ENCODE measurements at regions of chr2 and their contacts with region 1.

Region 1: DNA sequence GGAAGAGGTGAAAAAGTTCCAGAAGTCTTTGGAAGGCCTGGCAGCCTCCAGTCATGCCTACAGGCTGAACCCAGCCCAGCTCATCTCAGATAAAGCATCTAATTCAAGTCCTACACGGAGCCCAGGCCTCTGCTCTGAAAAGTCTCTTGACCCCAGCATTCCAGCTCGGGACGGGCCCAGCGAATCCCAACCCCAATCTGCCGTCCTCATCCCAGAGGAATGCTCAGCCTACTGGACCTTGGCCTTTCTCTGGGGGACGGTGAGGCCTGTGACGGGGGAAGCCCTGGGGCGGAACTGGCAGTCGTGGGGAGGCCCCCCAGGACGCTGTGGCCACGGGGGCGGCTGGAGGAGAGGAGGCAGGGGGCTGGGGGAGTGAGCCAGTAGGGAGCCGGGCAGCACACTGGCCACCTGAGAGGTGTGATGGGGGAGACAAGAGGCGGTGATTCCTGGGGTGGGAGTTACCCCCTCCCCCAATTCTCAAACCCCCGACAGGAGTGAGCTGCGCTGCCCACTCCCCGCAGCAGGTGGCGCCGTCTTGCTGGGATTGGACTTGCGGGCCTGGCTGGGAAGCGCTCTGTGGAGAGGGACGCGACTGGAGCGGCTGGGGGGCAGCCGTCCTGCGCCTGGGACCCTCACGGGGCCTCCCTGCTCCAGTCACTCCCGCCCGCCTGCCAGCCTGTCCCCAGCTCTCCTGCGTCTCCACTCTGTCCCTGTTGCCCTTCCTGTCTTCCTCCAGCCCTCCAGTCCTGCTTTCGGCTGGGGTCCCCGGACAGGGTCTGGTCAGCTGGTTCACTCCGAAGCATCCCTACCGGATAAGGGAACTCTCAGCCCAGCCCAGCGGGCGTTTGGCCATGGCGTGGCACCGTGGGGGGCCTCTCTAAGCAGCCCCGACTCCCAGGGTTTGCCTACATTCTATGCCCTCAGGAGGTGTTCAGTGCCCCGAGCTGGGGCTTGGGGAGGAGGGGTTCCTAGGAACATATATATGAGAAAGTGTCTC is 182.6 kb upstream of the HAAO start:
- DNase-seq: peak; percentile 85
- H3K4me3 Mint-ChIP-seq: no peak overlapping the region
- H3K27ac Mint-ChIP-seq: peak overlapping the region; percentile 86
- H3K4me1 Mint-ChIP-seq: peaks cover 73% of the 10 kb centered on the region
- H3K27me3 Mint-ChIP-seq: no peaks in the 10 kb centered on the region
- CTCF ChIP-seq: peak; percentile 92

Region 2: GRCh38 chr2:42944779-42945415 is 30.1 kb before region 1 on chr2:
- CTCF ChIA-PET with region 1: interaction called, 6 read pairs
- intact Hi-C with region 1: loop called (anchors 2 kb)
- DNase-seq: no peak
- H3K4me3 Mint-ChIP-seq: no peak overlapping the region
- H3K27ac Mint-ChIP-seq: no peak overlapping the region
- H3K4me1 Mint-ChIP-seq: peaks cover 29% of the 10 kb centered on the region
- H3K27me3 Mint-ChIP-seq: no peaks in the 10 kb centered on the region
- CTCF ChIP-seq: no peak

Region 3: DNA sequence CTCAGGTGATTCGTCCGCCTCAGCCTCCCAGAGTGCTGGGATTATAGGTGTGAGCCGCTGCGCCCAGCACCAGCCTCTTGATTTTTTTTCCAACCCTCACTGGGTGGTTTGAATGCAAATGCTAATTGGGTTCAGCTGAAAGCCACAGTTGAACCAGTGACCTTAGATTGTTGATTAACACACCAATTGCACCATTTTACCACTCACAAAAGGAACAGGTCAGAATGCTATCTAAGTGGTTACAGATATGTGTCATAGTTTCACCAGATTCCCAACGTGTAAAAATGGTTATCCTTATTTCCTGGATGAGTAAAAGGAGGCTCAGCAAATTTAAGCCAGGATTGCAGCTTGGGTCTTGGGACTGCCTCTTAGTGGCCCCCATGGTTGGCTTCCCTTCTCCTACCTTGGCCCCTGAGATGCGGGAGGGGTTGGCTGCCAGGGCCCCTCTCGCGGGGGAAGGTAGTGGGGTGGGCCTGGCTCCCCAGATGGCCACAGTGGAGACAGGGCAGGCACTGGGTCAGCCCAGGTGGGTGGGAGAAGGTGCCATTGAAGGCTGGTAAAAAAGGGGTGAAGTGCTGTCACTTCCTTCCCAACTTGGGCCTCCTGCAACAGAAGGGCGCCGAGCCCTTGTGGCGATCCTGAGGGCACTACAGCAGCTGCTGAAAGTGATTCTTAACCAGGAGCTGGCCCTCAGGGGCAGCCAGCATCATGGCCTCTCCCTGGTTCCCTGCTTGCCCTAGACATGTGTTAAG is 17.7 kb before region 1 on chr2:
- CTCF ChIA-PET with region 1: no interaction called
- intact Hi-C with region 1: no loop called
- DNase-seq: peak; percentile 41
- H3K4me3 Mint-ChIP-seq: no peak overlapping the region
- H3K27ac Mint-ChIP-seq: peak overlapping the region; percentile 22
- H3K4me1 Mint-ChIP-seq: peaks cover 47% of the 10 kb centered on the region
- H3K27me3 Mint-ChIP-seq: no peaks in the 10 kb centered on the region
- CTCF ChIP-seq: no peak

Region 4: GRCh38 chr2:43005245-43005974 is 30.4 kb after region 1 on chr2:
- CTCF ChIA-PET with region 1: interaction called, 24 read pairs
- intact Hi-C with region 1: loop called (anchors 1 kb)
- DNase-seq: peak; percentile 95
- H3K4me3 Mint-ChIP-seq: peak overlapping the region; percentile 61
- H3K27ac Mint-ChIP-seq: peak overlapping the region; percentile 93
- H3K4me1 Mint-ChIP-seq: peaks cover 86% of the 10 kb centered on the region
- H3K27me3 Mint-ChIP-seq: no peaks in the 10 kb centered on the region
- CTCF ChIP-seq: no peak

Region 5: GRCh38 chr2:43010438-43011157 is 35.6 kb after region 1 on chr2:
- CTCF ChIA-PET with region 1: interaction called, 24 read pairs
- intact Hi-C with region 1: loop called (anchors 1 kb)
- DNase-seq: peak; percentile 57
- H3K4me3 Mint-ChIP-seq: peak overlapping the region; percentile 18
- H3K27ac Mint-ChIP-seq: peak overlapping the region; percentile 98
- H3K4me1 Mint-ChIP-seq: peaks cover 66% of the 10 kb centered on the region
- H3K27me3 Mint-ChIP-seq: no peaks in the 10 kb centered on the region
- CTCF ChIP-seq: no peak

Region 6: DNA sequence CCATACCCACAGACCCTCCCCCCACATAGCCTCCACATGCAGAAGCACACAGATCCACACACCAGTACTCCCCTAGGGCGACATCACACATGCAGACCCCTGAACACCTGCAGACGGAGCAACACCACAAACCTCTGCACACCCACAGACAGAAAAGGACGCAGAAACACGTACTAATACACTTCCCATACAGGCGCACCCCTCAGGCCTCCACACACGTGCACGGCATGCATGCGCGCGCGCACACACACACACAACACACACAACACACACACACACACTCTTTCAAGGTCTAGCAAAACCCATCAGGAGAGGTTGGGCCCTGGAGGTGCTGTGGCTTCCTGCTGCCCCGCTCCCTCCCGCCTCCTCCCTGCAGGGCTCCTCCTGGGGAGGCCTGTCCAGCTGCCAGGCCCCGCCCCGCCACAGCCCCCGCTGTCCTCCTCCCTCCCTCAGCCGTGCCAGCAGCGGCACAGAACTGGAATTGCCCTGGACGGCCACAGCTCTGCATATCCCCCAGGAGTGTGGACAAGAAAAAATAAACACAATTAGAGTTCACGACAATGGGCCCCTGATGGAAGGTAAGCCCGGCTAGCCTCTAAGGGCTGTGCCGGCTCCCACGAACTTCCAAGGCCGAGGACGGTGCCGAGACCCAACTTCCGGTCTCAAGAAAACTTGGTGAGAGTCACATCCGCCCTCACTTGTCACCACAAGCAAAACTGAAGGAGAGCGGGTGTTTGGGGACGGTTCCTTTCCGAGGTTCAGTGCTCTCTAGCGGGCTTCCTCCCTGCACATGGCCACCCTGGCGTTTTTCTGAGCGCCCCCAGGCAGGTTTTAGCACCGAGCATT is 244.6 kb after region 1 on chr2:
- CTCF ChIA-PET with region 1: interaction called, 3 read pairs
- intact Hi-C with region 1: loop called (anchors 2 kb)
- DNase-seq: peak; percentile 91
- H3K4me3 Mint-ChIP-seq: peak overlapping the region; percentile 98
- H3K27ac Mint-ChIP-seq: peak overlapping the region; percentile 84
- H3K4me1 Mint-ChIP-seq: peaks cover 35% of the 10 kb centered on the region
- H3K27me3 Mint-ChIP-seq: no peaks in the 10 kb centered on the region
- CTCF ChIP-seq: no peak